ENCODE measurements at regions of chr22 and their contacts with region 1.

Region 1: GRCh38 chr22:41762980-41763779 is 37.3 kb upstream of the CCDC134 start:
- DNase-seq: peak; percentile 67 to 94
- H3K4me3 ChIP-seq: no peak overlapping the region
- H3K27ac ChIP-seq: no peak overlapping the region
- H3K4me1 ChIP-seq: no peaks in the 10 kb centered on the region
- H3K27me3 ChIP-seq: no peaks in the 10 kb centered on the region
- CTCF ChIP-seq: peak; percentile 71 to 94 (median 84)
- EP300 ChIP-seq: no peak
- POLR2A ChIP-seq: no peak
- RAD21 ChIP-seq: peak; percentile 42 to 64; a peak in 3 of 4 replicates

Region 2: DNA sequence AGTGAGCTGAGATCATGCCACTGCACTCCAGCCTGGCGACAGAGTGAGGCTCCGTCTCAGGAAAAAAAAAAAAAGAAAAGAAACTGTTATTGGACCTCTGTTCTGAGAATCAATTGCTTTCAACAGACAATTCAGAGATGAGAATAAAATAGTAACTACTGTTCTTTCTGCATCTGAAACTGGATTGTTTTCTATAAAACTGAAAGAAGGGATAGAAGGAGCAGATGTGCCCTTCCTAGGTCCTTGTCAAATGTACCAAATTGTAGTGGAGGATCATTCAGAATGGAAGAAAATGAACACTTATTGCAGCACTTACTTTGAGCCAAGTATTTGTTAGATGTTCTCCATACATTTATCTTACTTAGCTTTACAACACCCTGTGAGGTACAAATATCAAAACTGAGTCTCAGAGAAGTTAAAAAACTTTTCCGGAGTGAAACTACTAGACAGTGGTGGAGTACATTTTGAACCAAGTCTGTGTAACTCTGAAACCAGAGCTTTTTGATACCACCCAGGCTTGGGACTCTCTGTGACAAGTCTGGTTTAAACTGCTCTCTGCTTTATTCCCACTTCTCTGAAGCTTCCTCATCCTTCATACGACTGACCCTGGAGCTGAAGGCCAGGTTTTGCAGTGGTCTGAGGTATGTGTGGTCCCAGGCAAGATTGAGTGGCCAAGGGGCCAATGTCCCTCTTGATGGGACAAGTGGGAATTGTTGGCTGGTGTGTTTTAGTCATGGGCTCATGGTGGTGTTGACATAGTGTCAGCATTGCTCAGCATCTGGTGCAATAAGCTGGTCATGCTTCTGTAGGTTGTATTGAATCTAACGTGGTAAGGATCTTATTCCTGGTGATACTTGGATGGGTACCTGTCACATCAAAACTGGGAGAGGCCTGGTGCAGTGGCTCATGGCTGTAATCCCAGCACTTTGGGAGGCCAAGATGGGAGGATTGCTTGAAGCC is 10.9 kb before region 1 on chr22:
- CTCF ChIA-PET with region 1: interaction called, 54 read pairs
- POLR2A ChIA-PET with region 1: interaction called, 5 read pairs
- DNase-seq: no peak
- H3K4me3 ChIP-seq: no peak overlapping the region
- H3K27ac ChIP-seq: no peak overlapping the region
- H3K4me1 ChIP-seq: peaks cover 0 to 7% (median 4%) of the 10 kb centered on the region in 4 experiments; a peak in 5 of 7 replicates
- H3K27me3 ChIP-seq: no peaks in the 10 kb centered on the region; a peak in 2 of 7 replicates
- CTCF ChIP-seq: no peak
- EP300 ChIP-seq: no peak
- POLR2A ChIP-seq: no peak
- RAD21 ChIP-seq: no peak

Measured in H1 (cell line).